Activated naive CD4-positive, alpha-beta T cell treated with anti-CD3 and anti-CD28 coated beads for 36 hours (primary cell): ENCODE measurements at regions of chr7 and their contacts with region 1.

Region 1: DNA sequence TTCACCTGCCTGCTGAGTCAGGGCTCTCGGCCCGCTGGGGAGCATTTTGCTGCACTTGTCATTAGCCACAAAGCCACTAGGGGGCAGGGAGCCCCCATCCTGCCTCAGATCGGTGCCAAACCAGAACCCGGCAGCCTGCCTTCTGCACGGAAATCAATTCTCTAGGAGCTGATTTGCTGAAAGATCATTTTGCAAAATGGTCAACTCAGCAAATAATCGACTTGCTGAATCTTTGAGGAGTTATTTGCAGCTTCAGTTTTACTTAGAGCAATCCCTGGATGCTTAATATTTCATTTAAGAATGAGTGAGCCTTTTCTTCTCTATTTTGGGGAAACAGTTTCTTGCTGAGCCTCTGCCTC is 1.7 kb upstream of the GIMAP8 start:
- DNase-seq: peak; percentile 95
- H3K4me3 Mint-ChIP-seq: peak overlapping the region; percentile 98
- H3K27ac Mint-ChIP-seq: peak overlapping the region; percentile 99
- H3K4me1 Mint-ChIP-seq: peaks cover 42% of the 10 kb centered on the region
- H3K27me3 Mint-ChIP-seq: no peaks in the 10 kb centered on the region

Region 2: DNA sequence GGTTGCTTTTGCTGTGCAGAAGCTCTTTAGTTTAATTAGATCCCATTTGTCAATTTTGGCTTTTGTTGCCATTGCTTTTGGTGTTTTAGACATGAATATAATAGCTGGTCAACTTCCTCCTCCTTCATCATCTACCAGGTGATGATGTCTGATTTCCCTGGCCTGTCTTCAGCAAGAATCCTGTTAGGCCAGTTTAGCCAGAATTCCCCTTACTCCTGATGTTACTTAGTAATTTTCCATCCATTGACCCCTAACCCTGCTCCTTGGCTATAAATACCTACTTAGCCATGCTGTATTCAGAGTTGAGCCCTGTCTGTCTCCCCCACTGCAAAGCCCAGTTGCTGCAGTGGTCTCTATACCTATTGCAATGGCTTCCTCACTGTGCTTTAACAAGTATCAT is 1079.3 kb before region 1 on chr7:
- CTCF ChIA-PET with region 1: no interaction called
- intact Hi-C with region 1: no loop called
- DNase-seq: no peak
- H3K4me3 Mint-ChIP-seq: no peak overlapping the region
- H3K27ac Mint-ChIP-seq: no peak overlapping the region
- H3K4me1 Mint-ChIP-seq: no peaks in the 10 kb centered on the region
- H3K27me3 Mint-ChIP-seq: peaks cover 7% of the 10 kb centered on the region

Region 3: GRCh38 chr7:150507947-150508602 is 59.3 kb after region 1 on chr7:
- CTCF ChIA-PET with region 1: interaction called, 17 read pairs
- intact Hi-C with region 1: loop called (anchors 1 kb)
- DNase-seq: peak; percentile 61
- H3K4me3 Mint-ChIP-seq: peak overlapping the region; percentile 79
- H3K27ac Mint-ChIP-seq: peak overlapping the region; percentile 96
- H3K4me1 Mint-ChIP-seq: peaks cover 97% of the 10 kb centered on the region
- H3K27me3 Mint-ChIP-seq: no peaks in the 10 kb centered on the region

Region 4: GRCh38 chr7:150567169-150567568 is 118.4 kb after region 1 on chr7 and contains the start of gene GIMAP4:
- CTCF ChIA-PET with region 1: interaction called, 31 read pairs
- intact Hi-C with region 1: loop called (anchors 1 kb)
- DNase-seq: peak; percentile 64
- H3K4me3 Mint-ChIP-seq: peak within 1 kb of the TSS; percentile 85
- H3K27ac Mint-ChIP-seq: peak within 1 kb of the TSS; percentile 96
- H3K4me1 Mint-ChIP-seq: peaks cover 66% of the 10 kb centered on the region
- H3K27me3 Mint-ChIP-seq: no peaks in the 10 kb centered on the region
- total RNA-seq, gene GIMAP4: 180 to 193 TPM

Region 5: DNA sequence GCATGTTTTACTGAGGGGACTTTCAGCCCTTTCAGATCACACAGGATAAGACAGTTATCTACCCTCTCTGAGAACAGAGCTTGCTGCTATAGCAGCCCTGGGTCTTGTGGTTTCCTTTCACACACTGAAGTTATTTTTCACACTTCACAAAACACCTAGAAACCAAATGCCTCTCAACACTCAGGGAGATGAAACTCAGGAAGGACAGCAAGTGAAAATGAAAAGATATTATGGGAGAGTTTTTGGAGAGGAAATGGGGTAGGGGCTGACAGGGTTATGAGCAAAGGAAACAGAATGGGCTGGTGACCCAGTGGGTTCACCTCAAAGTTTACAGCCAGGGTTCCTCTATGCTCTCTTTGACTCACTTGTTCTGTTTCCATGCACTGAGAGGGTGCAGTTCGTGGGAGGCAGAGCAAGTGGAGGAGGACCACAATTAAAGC is 219.7 kb after region 1 on chr7:
- CTCF ChIA-PET with region 1: interaction called, 5 read pairs
- intact Hi-C with region 1: loop called (anchors 1 kb)
- DNase-seq: peak; percentile 71
- H3K4me3 Mint-ChIP-seq: peak overlapping the region; percentile 19
- H3K27ac Mint-ChIP-seq: peak overlapping the region; percentile 95
- H3K4me1 Mint-ChIP-seq: peaks cover 88% of the 10 kb centered on the region
- H3K27me3 Mint-ChIP-seq: no peaks in the 10 kb centered on the region

Region 6: GRCh38 chr7:150716368-150716767 is 267.6 kb after region 1 on chr7 and contains the start of gene GIMAP1:
- CTCF ChIA-PET with region 1: interaction called, 9 read pairs
- intact Hi-C with region 1: loop called (anchors 1 kb)
- DNase-seq: peak; percentile 81
- H3K4me3 Mint-ChIP-seq: peak within 1 kb of the TSS; percentile 97
- H3K27ac Mint-ChIP-seq: peak within 1 kb of the TSS; percentile 92
- H3K4me1 Mint-ChIP-seq: peaks cover 62% of the 10 kb centered on the region
- H3K27me3 Mint-ChIP-seq: no peaks in the 10 kb centered on the region
- total RNA-seq, gene GIMAP1: 5.1 to 5.3 TPM

Region 7: GRCh38 chr7:150759479-150759878 is 310.7 kb after region 1 on chr7:
- CTCF ChIA-PET with region 1: interaction called, 43 read pairs
- intact Hi-C with region 1: loop called (anchors 1 kb)
- DNase-seq: no peak
- H3K4me3 Mint-ChIP-seq: no peak overlapping the region
- H3K27ac Mint-ChIP-seq: no peak overlapping the region
- H3K4me1 Mint-ChIP-seq: peaks cover 27% of the 10 kb centered on the region
- H3K27me3 Mint-ChIP-seq: no peaks in the 10 kb centered on the region

Region 8: DNA sequence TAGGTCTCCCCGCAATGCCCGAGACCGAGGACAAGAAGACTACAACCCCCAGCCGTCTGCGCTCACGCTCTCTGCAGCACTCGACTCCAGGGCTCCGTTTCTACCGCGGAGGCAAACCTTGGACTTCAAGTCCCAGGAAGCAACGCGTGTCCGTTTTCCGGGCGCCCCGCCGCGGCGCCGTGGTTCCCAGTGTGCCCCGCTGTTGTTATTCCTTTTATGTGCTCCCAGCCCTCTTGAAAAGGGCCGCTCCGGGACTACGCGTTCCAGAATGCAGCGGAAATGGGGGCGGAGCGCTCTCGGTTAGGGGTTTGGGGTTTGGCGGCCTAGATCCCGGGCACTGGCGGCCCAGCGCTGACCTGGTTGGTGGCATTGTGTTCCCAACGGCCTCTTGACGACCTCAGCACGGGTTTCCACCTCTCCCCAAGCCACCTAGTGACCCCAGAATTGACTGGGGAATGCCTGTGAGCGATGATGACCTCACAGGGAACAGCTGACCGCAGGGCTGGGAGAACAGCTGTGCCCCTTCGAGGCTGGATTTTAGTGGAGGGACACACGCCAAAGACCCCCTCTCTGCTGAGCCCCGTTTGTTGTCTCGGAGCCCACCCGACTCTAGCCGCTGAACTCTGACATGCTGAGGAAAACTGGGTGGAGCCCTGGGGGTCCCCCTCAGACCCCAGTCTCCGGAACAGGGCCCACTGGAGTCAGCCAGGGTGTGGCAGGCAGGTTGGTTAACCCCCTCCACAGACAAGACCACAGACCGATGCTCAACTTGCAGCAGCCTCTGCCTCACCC is 609.4 kb after region 1 on chr7:
- CTCF ChIA-PET with region 1: no interaction called
- intact Hi-C with region 1: no loop called
- DNase-seq: peak; percentile 98
- H3K4me3 Mint-ChIP-seq: peak overlapping the region; percentile 85
- H3K27ac Mint-ChIP-seq: peak overlapping the region; percentile 89
- H3K4me1 Mint-ChIP-seq: peaks cover 35% of the 10 kb centered on the region
- H3K27me3 Mint-ChIP-seq: no peaks in the 10 kb centered on the region